Panc1 (cell line): ENCODE measurements at regions of chr18 and their contacts with region 1.

Region 1: DNA sequence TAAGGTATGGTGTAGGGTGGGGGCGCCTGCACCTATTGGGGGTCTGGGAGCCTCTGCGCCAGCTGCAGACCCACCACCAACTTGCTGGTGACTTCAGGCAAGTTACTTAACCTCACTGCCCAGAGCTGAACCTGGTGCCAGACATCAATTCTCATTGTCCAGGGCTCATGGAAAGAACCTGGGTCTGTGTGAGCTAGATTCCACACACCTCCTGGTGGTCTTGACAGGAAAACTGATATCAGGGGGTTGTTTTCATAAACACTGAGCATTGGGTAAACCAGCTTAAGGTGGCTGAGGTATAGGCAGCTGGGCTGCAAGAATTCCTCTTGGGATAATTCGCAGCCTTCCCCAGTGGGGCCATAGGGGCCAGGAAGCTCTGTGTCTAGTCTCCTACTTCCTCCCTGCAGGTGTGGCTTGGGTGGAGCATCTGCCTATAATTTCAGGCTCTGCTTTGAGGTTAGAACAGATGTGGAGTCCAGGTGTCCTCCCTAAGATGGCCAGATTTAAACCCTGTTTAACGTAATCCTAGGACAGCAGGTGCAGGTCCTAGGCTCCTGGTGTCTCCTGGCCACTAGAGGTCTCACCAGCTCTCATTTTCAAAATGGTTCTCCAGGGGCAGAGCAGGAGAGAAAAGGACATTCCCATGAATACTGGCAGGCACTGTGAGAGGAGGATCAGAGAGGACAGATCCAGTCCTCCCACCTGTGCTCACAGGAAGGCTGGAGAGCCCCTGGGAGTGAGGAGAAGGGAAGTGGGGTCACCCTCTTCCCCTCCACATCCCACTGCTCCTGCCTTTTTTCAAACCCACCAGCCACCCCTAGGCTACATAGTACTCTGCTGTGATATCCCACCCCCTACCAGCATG is 100.4 kb upstream of the SMAD2 start:
- DNase-seq: no peak
- ATAC-seq: peak; percentile 92
- H3K4me3 ChIP-seq: no peak overlapping the region
- H3K27ac ChIP-seq: no peak overlapping the region
- H3K4me1 ChIP-seq: no peaks in the 10 kb centered on the region
- H3K27me3 ChIP-seq: no peaks in the 10 kb centered on the region
- CTCF ChIP-seq: peak; percentile 73

Region 2: GRCh38 chr18:48230467-48231113 is 199.7 kb after region 1 on chr18:
- CTCF ChIA-PET with region 1: no interaction called
- POLR2A ChIA-PET with region 1: no interaction called
- in situ Hi-C with region 1: no loop called
- intact Hi-C with region 1: loop called (anchors 5 kb)
- DNase-seq: no peak
- ATAC-seq: peak; percentile 92
- H3K4me3 ChIP-seq: no peak overlapping the region
- H3K27ac ChIP-seq: no peak overlapping the region
- H3K4me1 ChIP-seq: no peaks in the 10 kb centered on the region
- H3K27me3 ChIP-seq: no peaks in the 10 kb centered on the region; the same call in 1 of the 2 replicates
- CTCF ChIP-seq: peak; percentile 54

Region 3: GRCh38 chr18:48345596-48345995 is 314.7 kb after region 1 on chr18:
- CTCF ChIA-PET with region 1: no interaction called
- POLR2A ChIA-PET with region 1: no interaction called
- in situ Hi-C with region 1: no loop called
- intact Hi-C with region 1: loop called (anchors 5 kb)
- DNase-seq: no peak
- ATAC-seq: no peak
- H3K4me3 ChIP-seq: no peak overlapping the region
- H3K27ac ChIP-seq: no peak overlapping the region
- H3K4me1 ChIP-seq: no peaks in the 10 kb centered on the region
- H3K27me3 ChIP-seq: no peaks in the 10 kb centered on the region; the same call in 1 of the 2 replicates
- CTCF ChIP-seq: peak; percentile 44

Region 4: GRCh38 chr18:48445540-48445939 is 414.7 kb after region 1 on chr18:
- CTCF ChIA-PET with region 1: interaction called, 3 read pairs
- POLR2A ChIA-PET with region 1: no interaction called
- in situ Hi-C with region 1: no loop called
- intact Hi-C with region 1: loop called (anchors 1 kb)
- DNase-seq: peak; percentile 53
- ATAC-seq: peak; percentile 85
- H3K4me3 ChIP-seq: no peak overlapping the region
- H3K27ac ChIP-seq: no peak overlapping the region
- H3K4me1 ChIP-seq: no peaks in the 10 kb centered on the region
- H3K27me3 ChIP-seq: no peaks in the 10 kb centered on the region; the same call in none of the 2 replicates
- CTCF ChIP-seq: peak; percentile 82

Region 5: GRCh38 chr18:48663931-48664847 is 633.3 kb after region 1 on chr18:
- CTCF ChIA-PET with region 1: interaction called, 14 read pairs
- POLR2A ChIA-PET with region 1: no interaction called
- in situ Hi-C with region 1: no loop called
- intact Hi-C with region 1: no loop called
- DNase-seq: no peak
- ATAC-seq: peak; percentile 74
- H3K4me3 ChIP-seq: no peak overlapping the region
- H3K27ac ChIP-seq: no peak overlapping the region
- H3K4me1 ChIP-seq: peaks cover 9% of the 10 kb centered on the region
- H3K27me3 ChIP-seq: no peaks in the 10 kb centered on the region
- CTCF ChIP-seq: peak; percentile 82

Region 6: GRCh38 chr18:48693625-48694262 is 662.9 kb after region 1 on chr18:
- CTCF ChIA-PET with region 1: no interaction called
- POLR2A ChIA-PET with region 1: no interaction called
- in situ Hi-C with region 1: no loop called
- intact Hi-C with region 1: no loop called
- DNase-seq: no peak
- ATAC-seq: no peak
- H3K4me3 ChIP-seq: no peak overlapping the region
- H3K27ac ChIP-seq: no peak overlapping the region
- H3K4me1 ChIP-seq: no peaks in the 10 kb centered on the region
- H3K27me3 ChIP-seq: no peaks in the 10 kb centered on the region
- CTCF ChIP-seq: no peak